Activated T-helper 1 cell treated with anti-CD3 and anti-CD28 coated beads, Interleukin-12 subunit alpha, Interleukin-12 subunit beta, Interleukin-2, Interleukin-4 antibody, amounts not matched to agents 30 ng/mL and 10 ng/mL and 1 ng/mL, durations not matched to agents 14 hours and 24 hours and 36 hours (primary cell): ENCODE measurements at regions of chr6 and their contacts with region 1.

Region 1: DNA sequence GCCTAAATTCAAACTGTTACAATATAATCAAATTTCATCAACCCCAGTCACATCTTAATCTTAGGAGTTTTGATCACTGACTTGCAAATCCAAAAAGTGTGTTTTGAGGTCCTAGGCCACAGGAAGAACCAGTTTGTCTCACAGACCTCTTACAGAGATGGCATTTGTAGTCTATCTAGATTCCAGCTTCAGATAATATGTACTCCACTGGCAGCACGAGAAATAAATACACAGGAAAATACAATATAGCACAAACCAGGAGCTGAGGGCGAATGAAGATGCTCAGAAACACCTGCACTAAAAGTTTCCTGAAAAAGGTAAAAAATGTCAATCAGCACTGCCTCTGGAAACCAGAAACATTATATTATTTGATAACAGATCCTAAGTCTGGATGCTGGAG is 647 bp upstream of the BTN3A3 start:
- DNase-seq: no peak
- H3K4me3 Mint-ChIP-seq: peak overlapping the region; percentile 87
- H3K27ac Mint-ChIP-seq: peak overlapping the region; percentile 92
- H3K4me1 Mint-ChIP-seq: peaks cover 40% of the 10 kb centered on the region
- H3K27me3 Mint-ChIP-seq: no peaks in the 10 kb centered on the region

Region 2: GRCh38 chr6:26312501-26313390 is 126.9 kb before region 1 on chr6:
- intact Hi-C with region 1: no loop called
- DNase-seq: peak; percentile 72
- H3K4me3 Mint-ChIP-seq: peak overlapping the region; percentile 84
- H3K27ac Mint-ChIP-seq: peak overlapping the region; percentile 92
- H3K4me1 Mint-ChIP-seq: peaks cover 51% of the 10 kb centered on the region
- H3K27me3 Mint-ChIP-seq: no peaks in the 10 kb centered on the region

Region 3: DNA sequence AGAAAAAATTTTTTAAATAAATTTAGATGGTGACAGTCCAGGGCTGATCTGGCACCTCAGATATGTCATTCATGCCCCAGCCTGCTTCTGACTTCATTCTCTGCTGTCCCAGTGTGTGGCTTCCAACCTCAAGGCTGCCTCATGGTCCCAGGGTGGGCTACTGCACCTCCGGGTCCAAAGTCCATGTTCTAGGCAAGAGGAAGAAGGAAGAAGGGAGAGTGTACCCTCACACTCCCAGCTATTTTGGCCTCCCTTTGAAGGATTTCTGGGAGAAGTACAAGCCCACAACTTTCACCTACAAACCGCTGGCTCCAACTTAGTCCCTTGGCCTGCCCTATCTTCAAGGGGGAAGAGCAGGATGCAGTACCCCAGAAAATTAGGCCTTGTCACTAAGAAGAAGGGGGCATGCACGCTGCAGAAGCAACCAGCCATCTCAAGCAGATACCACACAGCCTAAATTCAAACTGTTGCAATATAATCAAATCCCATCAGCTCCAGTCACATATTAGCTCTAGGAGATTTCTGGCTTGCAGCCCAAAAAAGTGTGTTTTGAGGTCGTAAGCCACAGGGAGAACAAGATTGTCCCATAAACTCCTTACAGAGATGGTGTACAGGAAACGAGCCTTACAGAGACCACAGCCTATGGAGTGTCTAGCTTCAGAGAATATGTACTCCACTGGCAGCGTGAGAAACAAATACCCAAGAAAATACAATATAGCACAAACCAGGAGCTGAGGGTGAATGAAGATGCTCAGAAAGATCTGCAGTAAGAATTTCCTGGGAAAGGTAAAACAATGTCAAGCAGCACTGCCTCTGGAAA is 75.6 kb before region 1 on chr6:
- intact Hi-C with region 1: loop called (anchors 1 kb)
- DNase-seq: peak; percentile 10
- H3K4me3 Mint-ChIP-seq: no peak overlapping the region
- H3K27ac Mint-ChIP-seq: no peak overlapping the region
- H3K4me1 Mint-ChIP-seq: peaks cover 45% of the 10 kb centered on the region
- H3K27me3 Mint-ChIP-seq: no peaks in the 10 kb centered on the region

Region 4: DNA sequence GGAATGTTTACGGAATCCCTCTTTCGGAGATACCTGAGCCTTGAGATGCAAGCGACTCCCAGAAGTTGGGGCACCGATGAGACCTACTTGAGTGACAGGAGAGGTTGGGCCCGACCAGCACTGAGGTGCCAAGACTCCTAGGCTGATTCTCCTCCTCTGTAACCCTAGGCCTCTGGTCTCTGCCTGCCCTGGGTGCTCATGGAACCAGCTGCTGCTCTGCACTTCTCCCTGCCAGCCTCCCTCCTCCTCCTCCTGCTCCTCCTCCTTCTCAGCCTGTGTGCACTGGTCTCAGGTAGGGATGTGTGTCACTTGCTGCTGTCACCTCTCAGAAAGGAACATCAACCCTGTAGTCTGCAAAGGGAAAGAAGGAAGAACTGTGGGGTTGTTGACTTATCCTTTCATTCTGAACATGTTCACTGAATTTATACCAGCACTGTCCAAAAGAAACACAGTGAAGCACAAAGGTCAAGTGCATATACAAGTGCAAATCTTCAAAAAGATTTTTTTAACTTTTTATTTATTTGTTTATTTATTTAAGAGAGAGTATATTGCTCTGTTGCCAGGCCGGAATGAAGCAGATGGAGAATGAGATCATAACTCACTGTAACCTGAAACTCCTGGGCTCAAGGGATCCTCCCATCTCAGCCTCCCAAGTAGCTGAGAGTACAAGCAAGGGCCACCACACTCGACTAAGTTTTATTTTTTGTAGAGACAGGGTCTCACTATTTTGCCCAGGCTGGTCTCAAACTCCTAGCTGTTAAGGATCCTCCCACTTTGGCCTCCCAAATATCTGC is 55.8 kb before region 1 on chr6:
- intact Hi-C with region 1: loop called (anchors 1 kb)
- DNase-seq: no peak
- H3K4me3 Mint-ChIP-seq: peak overlapping the region; percentile 95
- H3K27ac Mint-ChIP-seq: peak overlapping the region; percentile 90
- H3K4me1 Mint-ChIP-seq: peaks cover 57% of the 10 kb centered on the region
- H3K27me3 Mint-ChIP-seq: no peaks in the 10 kb centered on the region

Region 5: GRCh38 chr6:26401987-26402658 is 37.5 kb before region 1 on chr6 and contains the start of gene BTN3A1:
- intact Hi-C with region 1: loop called (anchors 1 kb)
- DNase-seq: peak; percentile 61
- H3K4me3 Mint-ChIP-seq: peak within 1 kb of the TSS; percentile 94
- H3K27ac Mint-ChIP-seq: peak within 1 kb of the TSS; percentile 97
- H3K4me1 Mint-ChIP-seq: peaks cover 56% of the 10 kb centered on the region
- H3K27me3 Mint-ChIP-seq: no peaks in the 10 kb centered on the region
- total RNA-seq, gene BTN3A1: 28.2 and 30.6 TPM in 2 replicates

Region 6: GRCh38 chr6:26421259-26422144 is 18.2 kb before region 1 on chr6:
- intact Hi-C with region 1: loop called (anchors 1 kb)
- DNase-seq: peak; percentile 37
- H3K4me3 Mint-ChIP-seq: no peak overlapping the region
- H3K27ac Mint-ChIP-seq: no peak overlapping the region
- H3K4me1 Mint-ChIP-seq: peaks cover 4% of the 10 kb centered on the region
- H3K27me3 Mint-ChIP-seq: no peaks in the 10 kb centered on the region

Region 7: DNA sequence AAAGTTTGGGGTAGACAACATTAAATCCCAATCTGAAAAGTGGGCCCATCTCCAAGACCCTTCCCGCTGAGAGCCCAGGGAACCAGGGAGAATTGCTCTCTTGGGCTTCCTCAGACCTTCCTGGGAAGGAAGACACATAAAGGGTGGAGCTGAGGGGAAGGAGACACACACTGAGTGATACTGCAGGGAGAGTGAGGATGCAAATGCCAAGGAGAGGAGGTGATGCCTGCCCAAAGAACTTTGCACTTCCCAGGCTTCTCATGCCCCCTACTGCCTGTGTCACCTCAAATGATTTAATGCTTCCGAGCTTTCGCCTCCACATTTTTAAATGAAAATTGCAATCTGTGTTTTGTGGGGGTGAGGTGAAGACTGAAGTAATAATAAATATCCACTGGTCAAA is 10.6 kb after region 1 on chr6:
- intact Hi-C with region 1: no loop called
- DNase-seq: no peak
- H3K4me3 Mint-ChIP-seq: no peak overlapping the region
- H3K27ac Mint-ChIP-seq: no peak overlapping the region
- H3K4me1 Mint-ChIP-seq: peaks cover 26% of the 10 kb centered on the region
- H3K27me3 Mint-ChIP-seq: no peaks in the 10 kb centered on the region

Region 8: DNA sequence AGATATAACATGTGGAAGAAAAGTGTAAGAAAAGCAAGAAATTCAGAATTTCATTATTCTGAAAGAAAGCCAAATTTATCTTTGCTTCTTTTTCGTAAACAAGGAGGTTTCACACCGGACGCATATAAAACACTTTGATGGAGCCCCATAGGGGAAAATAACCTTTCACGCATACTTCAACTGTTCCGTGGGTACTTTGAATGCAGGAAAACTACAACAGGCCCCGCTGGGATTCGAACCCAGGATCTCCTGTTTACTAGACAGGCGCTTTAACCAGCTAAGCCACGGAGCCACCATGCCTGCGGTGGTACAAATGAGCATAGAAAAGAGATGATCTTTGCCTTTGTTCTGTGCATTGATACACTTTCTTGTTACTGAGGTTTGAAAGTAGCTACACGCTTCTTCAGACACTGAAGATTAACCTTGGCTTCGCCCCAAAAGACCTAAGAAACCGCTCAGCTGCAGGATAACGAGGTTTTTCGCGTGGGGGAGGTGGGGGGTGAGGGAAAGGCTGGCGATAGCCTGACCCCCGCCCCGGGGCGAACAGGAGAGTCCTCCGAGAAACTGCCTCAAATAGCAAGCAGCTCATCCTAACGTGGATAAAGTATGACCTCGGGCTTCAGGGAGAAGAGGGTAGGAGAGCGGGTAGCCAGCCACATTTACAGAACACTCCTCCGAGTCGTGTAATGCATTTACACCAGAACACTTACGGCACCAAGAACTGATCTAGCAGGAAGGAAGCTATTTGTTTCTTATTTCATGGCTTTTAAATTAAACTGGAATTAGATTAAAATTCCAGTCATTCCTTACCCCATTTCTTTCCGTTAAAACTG is 93.3 kb after region 1 on chr6:
- intact Hi-C with region 1: loop called (anchors 2 kb)
- DNase-seq: peak; percentile 86
- H3K4me3 Mint-ChIP-seq: peak overlapping the region; percentile 94
- H3K27ac Mint-ChIP-seq: peak overlapping the region; percentile 95
- H3K4me1 Mint-ChIP-seq: peaks cover 46% of the 10 kb centered on the region
- H3K27me3 Mint-ChIP-seq: peaks cover 3% of the 10 kb centered on the region

Region 9: DNA sequence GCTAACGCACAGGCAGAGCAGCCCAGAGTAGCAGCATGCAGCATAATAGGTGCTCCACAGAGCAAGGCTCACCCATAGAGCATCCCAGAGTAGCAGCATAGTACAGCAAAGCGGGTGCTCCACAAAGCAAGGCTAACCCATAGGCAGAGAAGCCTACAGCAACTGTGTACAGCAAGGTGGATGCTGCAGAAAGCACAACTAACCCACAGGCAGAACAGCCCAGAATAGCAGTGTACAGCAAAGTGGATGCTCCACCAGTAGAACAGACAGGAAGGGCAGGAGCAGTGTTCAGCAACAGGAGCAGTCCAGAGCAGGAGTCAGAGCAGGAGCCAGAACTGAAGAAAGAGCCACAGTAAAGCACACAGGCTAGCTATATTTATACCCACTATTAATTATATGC is 675.1 kb after region 1 on chr6:
- intact Hi-C with region 1: no loop called
- DNase-seq: no peak
- H3K4me3 Mint-ChIP-seq: no peak overlapping the region
- H3K27ac Mint-ChIP-seq: peak overlapping the region; percentile 31
- H3K4me1 Mint-ChIP-seq: peaks cover 5% of the 10 kb centered on the region
- H3K27me3 Mint-ChIP-seq: peaks cover 9% of the 10 kb centered on the region